CD4-positive, alpha-beta T cell (primary cell): ENCODE measurements at regions of chr7 and their contacts with region 1.

Region 1: DNA sequence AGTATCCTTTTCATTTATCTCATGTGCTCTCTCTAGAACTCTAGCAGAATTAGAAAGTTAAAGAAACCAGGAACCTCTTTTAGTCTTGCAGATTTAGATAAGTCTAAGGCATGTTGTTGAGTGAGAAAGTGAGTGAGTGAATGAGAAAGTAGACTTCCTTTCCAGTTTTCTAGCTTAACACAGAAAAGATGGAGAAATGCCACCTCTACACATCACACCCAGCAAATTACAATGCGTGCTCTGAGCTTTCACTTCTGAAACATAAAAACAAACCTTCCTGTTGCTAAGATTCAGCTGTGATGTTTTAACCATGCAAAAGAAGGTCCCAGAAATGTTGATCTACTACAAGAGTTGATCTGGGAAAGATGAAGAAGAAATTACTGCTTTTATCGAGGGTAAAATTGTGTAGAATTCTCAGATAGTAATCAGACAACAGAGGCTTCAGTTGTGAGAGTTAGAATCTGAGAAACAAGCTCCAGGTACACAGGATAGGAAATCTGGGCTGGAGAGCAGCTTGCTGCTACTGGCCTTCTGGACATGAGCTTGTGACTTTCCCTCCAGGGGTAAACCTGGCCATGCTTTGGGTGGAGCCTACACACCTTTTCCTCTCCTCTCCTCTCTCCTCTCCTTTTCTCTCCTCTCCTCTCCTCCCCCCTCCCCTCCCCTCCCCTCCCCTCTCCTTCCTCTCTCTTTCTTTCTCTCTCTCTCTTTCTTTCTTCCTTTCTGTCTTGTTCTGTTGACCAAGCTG is 4.6 kb downstream of the CYP3A5 start:
- DNase-seq: peak in 2 of 14 experiments; percentile 0 to 4
- ATAC-seq: peak; percentile 39
- H3K4me3 ChIP-seq: no peak overlapping the region
- H3K4me3 Mint-ChIP-seq: peak overlapping the region; percentile 46
- H3K27ac ChIP-seq: no peak overlapping the region
- H3K27ac Mint-ChIP-seq: peak overlapping the region; percentile 79
- H3K4me1 ChIP-seq: peaks cover 4% of the 10 kb centered on the region
- H3K4me1 Mint-ChIP-seq: peaks cover 31% of the 10 kb centered on the region
- H3K27me3 ChIP-seq: no peaks in the 10 kb centered on the region
- H3K27me3 Mint-ChIP-seq: no peaks in the 10 kb centered on the region
- CTCF ChIP-seq: no peak

Region 2: GRCh38 chr7:99693427-99694200 is 18.4 kb after region 1 on chr7:
- CTCF ChIA-PET with region 1: no interaction called
- POLR2A ChIA-PET with region 1: interaction called, 10 read pairs
- intact Hi-C with region 1: no loop called
- DNase-seq: peak in 12 of 14 experiments; percentile 1 to 57 (median 24)
- ATAC-seq: peak; percentile 92
- H3K4me3 ChIP-seq: no peak overlapping the region
- H3K4me3 Mint-ChIP-seq: no peak overlapping the region
- H3K27ac ChIP-seq: no peak overlapping the region
- H3K27ac Mint-ChIP-seq: peak overlapping the region; percentile 52
- H3K4me1 ChIP-seq: peaks cover 4% of the 10 kb centered on the region
- H3K4me1 Mint-ChIP-seq: peaks cover 21% of the 10 kb centered on the region
- H3K27me3 ChIP-seq: no peaks in the 10 kb centered on the region
- H3K27me3 Mint-ChIP-seq: no peaks in the 10 kb centered on the region
- CTCF ChIP-seq: no peak